ENCODE measurements at regions of chrX and their contacts with region 1.

Region 1: DNA sequence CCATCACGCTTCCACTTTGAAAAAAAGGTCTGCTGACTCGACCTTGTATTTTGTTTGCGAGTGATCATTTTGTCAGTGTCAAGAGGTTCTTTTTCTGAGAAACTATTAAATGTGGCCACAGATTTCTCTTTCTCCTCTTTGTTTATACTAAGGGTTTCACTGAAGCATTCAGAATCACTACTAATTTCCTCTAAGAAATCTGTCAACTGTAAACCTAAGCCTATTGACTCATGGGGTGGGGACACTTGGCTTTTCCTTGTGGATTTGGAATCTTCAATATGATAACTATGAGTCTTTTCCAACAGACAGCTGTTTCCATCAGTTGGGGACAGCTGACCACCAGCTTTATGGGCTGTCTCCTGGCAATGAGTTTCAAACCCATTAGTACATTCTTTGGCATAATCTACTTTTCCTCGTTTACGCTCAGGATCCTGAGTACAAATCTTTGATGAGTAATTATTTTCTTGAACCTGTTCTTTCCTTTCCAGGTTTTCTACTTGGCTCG is 13.8 kb downstream of the PGRMC1 start:
- DNase-seq: no peak
- ATAC-seq: no peak
- H3K4me3 ChIP-seq: no peak overlapping the region
- H3K27ac ChIP-seq: no peak overlapping the region
- H3K4me1 ChIP-seq: no peaks in the 10 kb centered on the region
- H3K27me3 ChIP-seq: no peaks in the 10 kb centered on the region
- CTCF ChIP-seq: no peak

Region 2: GRCh38 chrX:118637997-118638396 is 611.9 kb before region 1 on chrX:
- CTCF ChIA-PET with region 1: no interaction called
- POLR2A ChIA-PET with region 1: no interaction called
- intact Hi-C with region 1: no loop called
- DNase-seq: peak; percentile 44
- ATAC-seq: peak; percentile 64
- H3K4me3 ChIP-seq: no peak overlapping the region
- H3K27ac ChIP-seq: no peak overlapping the region
- H3K4me1 ChIP-seq: no peaks in the 10 kb centered on the region
- H3K27me3 ChIP-seq: no peaks in the 10 kb centered on the region
- CTCF ChIP-seq: peak; percentile 66

Region 3: DNA sequence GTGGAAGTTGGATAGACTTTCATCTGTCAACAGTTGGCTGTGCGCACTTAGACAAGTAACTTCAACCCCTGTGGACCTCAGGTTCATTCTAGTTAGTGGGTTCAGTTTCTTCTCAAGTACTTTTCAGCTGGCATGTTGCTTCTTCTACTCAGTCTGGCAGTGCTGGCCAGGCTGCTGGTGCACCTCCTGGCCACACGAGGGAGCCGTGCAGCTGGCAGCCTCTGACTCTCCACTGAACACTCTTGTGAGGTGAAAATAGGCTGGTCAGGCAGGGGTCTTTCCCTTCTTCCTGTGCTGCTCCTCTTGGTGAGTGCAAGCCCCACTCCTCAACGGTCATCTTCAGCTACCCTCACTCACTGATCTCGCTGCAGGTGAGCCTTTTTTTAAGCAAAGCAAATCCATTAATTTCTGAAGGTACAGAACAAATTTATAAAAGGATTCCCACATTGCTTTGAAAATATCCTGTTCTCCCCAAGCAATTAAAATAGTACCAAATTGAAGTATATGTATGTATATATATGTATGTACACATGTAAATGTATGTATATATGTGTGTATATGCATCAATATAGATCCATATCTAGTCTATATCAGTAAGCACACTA is 244.9 kb before region 1 on chrX:
- CTCF ChIA-PET with region 1: no interaction called
- POLR2A ChIA-PET with region 1: no interaction called
- intact Hi-C with region 1: no loop called
- DNase-seq: peak; percentile 62
- ATAC-seq: peak; percentile 89
- H3K4me3 ChIP-seq: no peak overlapping the region
- H3K27ac ChIP-seq: no peak overlapping the region
- H3K4me1 ChIP-seq: no peaks in the 10 kb centered on the region
- H3K27me3 ChIP-seq: no peaks in the 10 kb centered on the region
- CTCF ChIP-seq: peak; percentile 83

Region 4: GRCh38 chrX:119072744-119073143 is 177.1 kb before region 1 on chrX and contains the start of gene CT47C1:
- CTCF ChIA-PET with region 1: no interaction called
- POLR2A ChIA-PET with region 1: no interaction called
- intact Hi-C with region 1: no loop called
- DNase-seq: no peak
- ATAC-seq: no peak
- H3K4me3 ChIP-seq: no peak within 1 kb of the TSS
- H3K27ac ChIP-seq: no peak within 1 kb of the TSS
- H3K4me1 ChIP-seq: peaks cover 11% of the 10 kb centered on the region; the same call in 1 of the 2 replicates
- H3K27me3 ChIP-seq: no peaks in the 10 kb centered on the region
- CTCF ChIP-seq: no peak
- total RNA-seq, gene CT47C1: 0.07 TPM in 1 of 2 replicates, not detected in the other

Region 5: GRCh38 chrX:119266364-119266995 is 16.6 kb after region 1 on chrX:
- CTCF ChIA-PET with region 1: no interaction called
- POLR2A ChIA-PET with region 1: no interaction called
- intact Hi-C with region 1: loop called (anchors 2 kb)
- DNase-seq: peak; percentile 52
- ATAC-seq: peak; percentile 57
- H3K4me3 ChIP-seq: no peak overlapping the region
- H3K27ac ChIP-seq: no peak overlapping the region
- H3K4me1 ChIP-seq: no peaks in the 10 kb centered on the region
- H3K27me3 ChIP-seq: no peaks in the 10 kb centered on the region
- CTCF ChIP-seq: peak; percentile 79

Region 6: DNA sequence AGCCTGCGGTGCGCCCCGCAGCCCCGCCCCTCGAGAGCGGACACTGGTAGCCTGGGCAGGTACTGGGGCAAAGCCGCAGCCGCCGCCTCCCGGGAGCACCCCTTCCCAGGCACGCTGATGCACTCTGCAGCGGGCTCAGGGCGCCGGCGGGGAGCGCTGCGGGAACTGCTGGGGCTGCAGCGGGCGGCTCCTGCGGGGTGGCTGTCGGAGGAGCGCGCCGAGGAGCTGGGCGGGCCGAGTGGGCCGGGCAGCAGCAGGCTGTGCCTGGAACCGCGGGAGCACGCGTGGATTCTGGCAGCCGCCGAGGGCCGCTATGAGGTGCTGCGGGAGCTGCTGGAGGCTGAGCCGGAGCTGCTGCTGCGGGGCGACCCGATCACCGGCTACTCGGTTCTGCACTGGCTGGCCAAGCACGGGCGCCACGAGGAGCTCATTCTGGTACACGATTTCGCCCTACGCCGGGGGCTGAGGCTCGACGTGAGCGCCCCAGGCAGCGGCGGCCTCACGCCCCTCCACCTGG is 508.9 kb after region 1 on chrX:
- CTCF ChIA-PET with region 1: no interaction called
- POLR2A ChIA-PET with region 1: no interaction called
- intact Hi-C with region 1: no loop called
- DNase-seq: no peak
- ATAC-seq: peak; percentile 66
- H3K4me3 ChIP-seq: peak overlapping the region; percentile 82
- H3K27ac ChIP-seq: no peak overlapping the region
- H3K4me1 ChIP-seq: peaks cover 11% of the 10 kb centered on the region
- H3K27me3 ChIP-seq: no peaks in the 10 kb centered on the region
- CTCF ChIP-seq: no peak

Measured in PC-3 (cell line).